ENCODE measurements at regions of chr17 and their contacts with region 1.

Region 1: DNA sequence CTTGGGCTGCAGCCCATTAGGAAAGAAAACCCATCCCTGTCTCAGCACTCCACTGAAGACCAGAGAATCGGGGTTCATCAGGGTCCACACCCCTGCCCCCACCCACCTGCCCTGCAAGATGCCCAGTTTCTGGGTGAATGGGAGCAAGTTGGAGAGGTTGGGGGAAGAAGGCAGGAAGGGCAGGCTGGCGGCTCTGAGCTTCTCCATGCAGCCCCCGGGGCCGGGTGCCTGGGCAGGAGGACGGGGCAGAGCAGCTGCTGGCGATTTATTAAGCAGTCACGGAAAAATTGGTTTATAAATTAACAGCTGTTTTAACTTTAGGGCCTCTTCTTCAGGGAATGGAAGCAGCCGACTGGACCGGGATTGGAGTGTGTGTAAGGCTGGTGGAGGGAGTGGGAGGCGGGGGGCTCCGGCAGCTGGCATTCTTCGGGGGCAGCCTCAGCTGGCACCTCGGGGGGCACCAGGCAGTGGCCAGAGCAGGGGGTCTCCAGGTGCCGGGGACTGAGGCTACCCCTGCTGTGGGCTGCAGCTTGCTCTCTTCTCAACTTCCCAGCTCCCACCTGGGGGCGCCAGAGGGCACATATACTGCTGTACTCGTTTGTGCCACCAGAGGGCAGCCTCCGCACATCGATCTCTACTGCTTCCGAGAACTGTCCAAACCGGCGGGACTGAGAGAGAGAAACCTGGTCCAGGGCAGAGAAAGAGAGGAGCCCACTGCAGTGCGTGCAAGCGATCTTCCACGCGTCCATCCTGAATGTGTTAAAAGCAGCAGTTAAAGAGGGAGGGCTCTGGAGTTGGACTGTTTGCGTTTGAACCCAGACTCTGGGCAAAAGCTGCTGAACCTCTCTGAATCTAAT is 5.0 kb upstream of the PPP1R1B start:
- DNase-seq: peak; percentile 81 to 83
- ATAC-seq: peak; percentile 63 to 88 (median 77)
- H3K4me3 ChIP-seq: no peak overlapping the region
- H3K27ac ChIP-seq: peak overlapping the region in 1 of 10 donors; percentile 47
- H3K4me1 ChIP-seq: peaks cover 2 to 32% (median 17%) of the 10 kb centered on the region in 9 donors
- H3K27me3 ChIP-seq: peaks cover 10 to 57% (median 24%) of the 10 kb centered on the region in 7 donors
- CTCF ChIP-seq: peak; percentile 96 to 100 (median 99)

Region 2: DNA sequence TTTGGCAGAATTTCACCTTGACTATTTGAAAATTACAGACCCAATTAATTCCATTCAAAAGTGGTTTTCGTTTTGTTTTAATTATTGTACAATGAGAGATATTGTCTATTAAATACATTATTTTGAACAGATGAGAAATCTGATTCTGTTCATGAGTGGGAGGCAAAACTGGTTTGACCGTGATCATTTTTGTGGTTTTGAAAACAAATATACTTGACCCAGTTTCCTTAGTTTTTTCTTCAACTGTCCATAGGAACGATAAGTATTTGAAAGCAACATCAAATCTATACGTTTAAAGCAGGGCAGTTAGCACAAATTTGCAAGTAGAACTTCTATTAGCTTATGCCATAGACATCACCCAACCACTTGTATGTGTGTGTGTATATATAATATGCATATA is 87.9 kb before region 1 on chr17:
- intact Hi-C with region 1: loop called in 2 of 10 experiments (anchors 5 kb)
- DNase-seq: no peak
- ATAC-seq: no peak
- H3K4me3 ChIP-seq: no peak overlapping the region
- H3K27ac ChIP-seq: no peak overlapping the region
- H3K4me1 ChIP-seq: peaks cover 0 to 52% (median 16%) of the 10 kb centered on the region in 9 donors
- H3K27me3 ChIP-seq: no peaks in the 10 kb centered on the region
- CTCF ChIP-seq: no peak

Region 3: DNA sequence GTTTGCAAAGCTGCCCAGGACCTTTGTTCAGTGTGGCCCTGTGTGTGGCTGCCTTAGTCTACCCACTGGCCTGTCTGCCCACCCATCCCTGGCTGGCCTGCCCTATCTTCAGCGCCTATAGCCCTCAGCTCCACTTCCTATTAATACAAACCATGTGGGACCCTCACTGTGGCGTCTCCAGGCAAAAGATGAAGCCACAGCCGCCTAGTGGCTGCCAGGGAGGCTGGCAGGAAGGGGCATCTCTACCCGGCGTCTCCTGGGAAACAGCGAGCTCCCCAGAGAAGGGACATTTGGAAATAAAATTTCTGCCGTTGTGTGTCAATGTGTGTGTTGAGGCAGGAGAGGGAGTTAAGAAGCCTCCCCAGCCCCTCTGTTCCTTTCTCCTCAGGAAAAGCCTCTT is 45.6 kb before region 1 on chr17:
- intact Hi-C with region 1: loop called in 2 of 10 experiments (anchors 5 kb)
- DNase-seq: no peak
- ATAC-seq: no peak
- H3K4me3 ChIP-seq: no peak overlapping the region
- H3K27ac ChIP-seq: no peak overlapping the region
- H3K4me1 ChIP-seq: peaks cover 0 to 39% (median 13%) of the 10 kb centered on the region in 9 donors
- H3K27me3 ChIP-seq: no peaks in the 10 kb centered on the region
- CTCF ChIP-seq: peak in 6 of 9 donors; percentile 19 to 40 (median 32)

Region 4: GRCh38 chr17:39598047-39598481 is 23.7 kb before region 1 on chr17:
- intact Hi-C with region 1: no loop called
- DNase-seq: no peak
- ATAC-seq: no peak
- H3K4me3 ChIP-seq: no peak overlapping the region
- H3K27ac ChIP-seq: no peak overlapping the region
- H3K4me1 ChIP-seq: peaks cover 4 to 38% (median 19%) of the 10 kb centered on the region in 9 donors
- H3K27me3 ChIP-seq: peaks cover 19 to 100% (median 95%) of the 10 kb centered on the region in 7 donors
- CTCF ChIP-seq: no peak

Region 5: GRCh38 chr17:39754161-39754951 is 132.6 kb after region 1 on chr17:
- intact Hi-C with region 1: loop called in 8 of 10 experiments (anchors 1 to 5 kb)
- DNase-seq: peak; percentile 90 to 93
- ATAC-seq: peak; percentile 93 to 96 (median 94)
- H3K4me3 ChIP-seq: peak overlapping the region; percentile 44 to 95 (median 66)
- H3K27ac ChIP-seq: peak overlapping the region; percentile 70 to 99 (median 94)
- H3K4me1 ChIP-seq: peaks cover 4 to 51% (median 32%) of the 10 kb centered on the region in 9 donors
- H3K27me3 ChIP-seq: peaks cover 0 to 3% (median 0%) of the 10 kb centered on the region in 7 donors
- CTCF ChIP-seq: peak; percentile 83 to 99 (median 97)

Region 6: GRCh38 chr17:40062329-40063186 is 440.8 kb after region 1 on chr17 and contains the start of gene THRA:
- intact Hi-C with region 1: no loop called
- DNase-seq: peak; percentile 76 to 83
- ATAC-seq: peak; percentile 54 to 92 (median 68)
- H3K4me3 ChIP-seq: peak within 1 kb of the TSS; percentile 85 to 100 (median 99)
- H3K27ac ChIP-seq: peak within 1 kb of the TSS; percentile 94 to 100 (median 98)
- H3K4me1 ChIP-seq: peaks cover 26 to 62% (median 56%) of the 10 kb centered on the region in 9 donors
- H3K27me3 ChIP-seq: no peaks in the 10 kb centered on the region
- CTCF ChIP-seq: peak in 5 of 9 donors; percentile 4 to 48 (median 20)
- total RNA-seq, gene THRA: 59.8 to 102 (median 69.7) TPM

Region 7: DNA sequence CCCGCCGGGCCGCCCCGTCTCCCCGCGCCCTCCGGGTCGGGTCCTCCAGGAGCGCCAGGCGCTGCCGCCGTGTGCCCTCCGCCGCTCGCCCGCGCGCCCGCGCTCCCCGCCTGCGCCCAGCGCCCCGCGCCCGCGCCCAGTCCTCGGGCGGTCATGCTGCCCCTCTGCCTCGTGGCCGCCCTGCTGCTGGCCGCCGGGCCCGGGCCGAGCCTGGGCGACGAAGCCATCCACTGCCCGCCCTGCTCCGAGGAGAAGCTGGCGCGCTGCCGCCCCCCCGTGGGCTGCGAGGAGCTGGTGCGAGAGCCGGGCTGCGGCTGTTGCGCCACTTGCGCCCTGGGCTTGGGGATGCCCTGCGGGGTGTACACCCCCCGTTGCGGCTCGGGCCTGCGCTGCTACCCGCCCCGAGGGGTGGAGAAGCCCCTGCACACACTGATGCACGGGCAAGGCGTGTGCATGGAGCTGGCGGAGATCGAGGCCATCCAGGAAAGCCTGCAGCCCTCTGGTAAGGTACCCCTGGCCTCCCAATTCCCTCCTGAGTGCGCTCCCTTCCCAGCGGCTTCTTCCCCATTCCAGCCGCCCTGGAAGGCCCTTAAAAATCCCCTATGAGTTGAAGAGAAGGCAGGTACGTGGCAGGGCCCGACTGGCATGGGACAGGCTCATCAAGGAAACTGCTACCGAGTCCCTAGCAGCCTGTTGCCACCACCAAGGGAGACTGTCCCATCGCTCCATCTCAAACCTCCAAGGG is 822.0 kb after region 1 on chr17:
- intact Hi-C with region 1: no loop called
- DNase-seq: peak; percentile 77 to 86
- ATAC-seq: peak; percentile 22 to 61 (median 42)
- H3K4me3 ChIP-seq: peak overlapping the region; percentile 66 to 89 (median 82)
- H3K27ac ChIP-seq: peak overlapping the region; percentile 89 to 99 (median 96)
- H3K4me1 ChIP-seq: peaks cover 16 to 61% (median 50%) of the 10 kb centered on the region in 9 donors
- H3K27me3 ChIP-seq: peaks cover 0 to 15% (median 0%) of the 10 kb centered on the region in 7 donors
- CTCF ChIP-seq: peak; percentile 16 to 57 (median 45)

Measured in heart right ventricle (tissue), 16 donors.